ENCODE measurements at regions of chr9 and their contacts with region 1.

Region 1: GRCh38 chr9:126965541-126966428 is 51.2 kb downstream of the RALGPS1 start:
- DNase-seq: peak; percentile 71

Region 2: GRCh38 chr9:126860077-126860756 is 105.6 kb before region 1 on chr9 and contains the start of gene ZBTB34:
- in situ Hi-C with region 1: no loop called
- DNase-seq: peak; percentile 79

Region 3: DNA sequence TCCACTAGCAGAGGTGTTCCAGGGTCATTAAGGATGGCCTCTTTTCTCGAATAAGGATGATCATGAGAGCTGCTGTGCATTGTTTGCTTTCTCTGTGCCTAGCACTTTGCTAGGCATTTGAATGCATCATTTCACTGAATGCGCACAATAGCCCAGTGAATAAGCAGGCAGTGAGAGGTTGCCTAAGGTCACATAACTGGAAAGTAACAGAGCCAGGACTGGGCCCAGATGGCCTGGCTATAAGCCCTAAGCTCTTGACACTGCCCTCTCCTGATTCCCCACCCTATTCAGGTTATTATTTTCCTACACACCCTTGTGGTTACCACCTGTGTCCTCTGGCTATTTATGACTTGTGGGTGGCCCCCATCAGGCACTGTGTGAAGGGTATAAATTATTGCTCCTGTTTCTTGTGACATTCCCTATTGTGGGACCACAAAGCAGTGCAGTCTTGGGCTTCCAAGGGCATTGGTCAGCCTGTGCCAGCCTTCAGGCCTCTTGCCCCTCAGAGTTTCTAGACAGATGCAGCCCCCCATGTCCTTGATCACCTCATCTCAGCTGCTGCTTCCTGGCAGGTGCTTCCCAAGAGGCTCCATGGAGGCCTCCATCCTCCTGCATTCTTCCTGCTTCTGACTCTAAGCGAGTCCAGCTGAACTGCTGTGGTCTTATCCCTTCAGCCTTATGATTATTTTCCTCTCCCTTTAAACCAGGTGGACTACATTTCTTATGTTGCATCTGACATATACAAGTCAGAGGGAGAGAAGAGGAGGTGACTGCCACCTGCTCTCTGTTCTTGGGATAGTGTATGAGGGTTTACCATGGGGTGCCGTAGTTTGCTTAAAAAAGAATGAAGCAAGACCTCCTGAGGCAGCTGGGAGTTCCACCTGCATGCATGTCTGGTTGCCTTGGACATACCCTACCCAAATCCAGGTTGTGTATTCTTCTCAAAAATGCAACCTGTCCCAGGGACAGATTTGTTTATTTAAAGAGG is 109.1 kb after region 1 on chr9:
- in situ Hi-C with region 1: no loop called
- DNase-seq: no peak

Region 4: DNA sequence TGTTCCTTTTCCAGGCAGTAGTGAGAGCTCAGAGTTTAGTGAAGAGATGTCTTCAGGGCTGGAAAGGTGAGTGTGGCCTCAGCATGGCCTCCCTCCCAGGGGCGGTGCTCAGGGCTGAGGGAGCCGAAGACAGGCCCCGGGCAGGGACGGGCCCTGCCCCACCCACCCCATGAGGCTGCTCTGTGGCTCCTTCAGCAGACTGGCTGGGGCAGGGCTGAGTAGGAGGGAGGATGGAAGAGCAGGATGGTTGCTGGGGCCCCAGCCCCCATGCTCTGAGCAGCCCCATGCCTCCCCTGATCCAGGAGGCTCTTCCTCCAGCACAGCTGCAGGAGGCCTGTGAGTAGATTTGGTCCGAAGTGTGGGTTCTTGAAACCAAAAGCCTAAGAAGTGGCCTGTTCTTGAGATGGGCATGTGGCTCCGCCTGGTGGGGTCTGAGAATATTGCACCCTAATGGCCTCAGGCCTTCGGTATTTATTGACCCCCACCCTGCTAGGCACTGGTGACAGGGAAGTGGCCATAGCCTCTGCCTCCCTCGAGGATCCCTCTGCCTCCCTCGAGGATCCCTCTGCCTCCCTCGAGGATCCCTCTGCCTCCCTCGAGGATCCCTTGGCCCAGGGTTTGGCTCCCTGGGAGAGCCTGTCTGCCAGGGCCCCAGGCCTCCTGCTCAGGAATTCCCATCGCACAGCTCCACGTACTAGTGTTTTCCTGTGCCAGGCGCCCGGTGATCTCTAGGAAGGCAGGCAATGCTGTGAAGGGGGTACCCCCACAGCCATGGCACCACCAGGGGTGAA is 233.4 kb after region 1 on chr9:
- in situ Hi-C with region 1: loop called (anchors 10 kb)
- DNase-seq: peak; percentile 84

Region 5: GRCh38 chr9:127396808-127397497 is 431.2 kb after region 1 on chr9 and contains the start of gene SLC2A8:
- in situ Hi-C with region 1: no loop called
- DNase-seq: peak; percentile 100